ENCODE measurements at regions of chr10 and their contacts with region 1.

Region 1: DNA sequence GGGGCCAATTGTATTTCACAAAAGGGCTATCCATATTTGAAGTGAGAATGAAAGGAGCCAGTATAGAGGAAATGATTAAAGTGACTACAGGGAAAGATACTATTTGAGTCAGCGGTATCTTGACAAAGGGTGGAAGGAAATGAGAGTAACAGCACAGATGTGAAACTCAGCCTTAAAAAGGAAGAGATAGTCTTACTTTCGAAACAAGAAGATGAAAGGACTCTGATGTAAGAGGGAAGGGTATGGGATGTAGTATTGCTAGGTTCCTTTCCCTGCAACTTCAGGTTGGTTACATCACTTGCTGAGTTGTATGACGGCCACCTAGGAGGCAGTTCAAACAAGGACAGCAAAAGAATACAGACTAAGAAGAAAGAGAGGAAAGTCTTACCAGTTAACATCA is 13.7 kb downstream of the CISD1 start:
- DNase-seq: peak; percentile 68
- H3K4me3 Mint-ChIP-seq: peak overlapping the region; percentile 57
- H3K27ac Mint-ChIP-seq: peak overlapping the region; percentile 91
- H3K4me1 Mint-ChIP-seq: peaks cover 41% of the 10 kb centered on the region
- H3K27me3 Mint-ChIP-seq: no peaks in the 10 kb centered on the region

Region 2: DNA sequence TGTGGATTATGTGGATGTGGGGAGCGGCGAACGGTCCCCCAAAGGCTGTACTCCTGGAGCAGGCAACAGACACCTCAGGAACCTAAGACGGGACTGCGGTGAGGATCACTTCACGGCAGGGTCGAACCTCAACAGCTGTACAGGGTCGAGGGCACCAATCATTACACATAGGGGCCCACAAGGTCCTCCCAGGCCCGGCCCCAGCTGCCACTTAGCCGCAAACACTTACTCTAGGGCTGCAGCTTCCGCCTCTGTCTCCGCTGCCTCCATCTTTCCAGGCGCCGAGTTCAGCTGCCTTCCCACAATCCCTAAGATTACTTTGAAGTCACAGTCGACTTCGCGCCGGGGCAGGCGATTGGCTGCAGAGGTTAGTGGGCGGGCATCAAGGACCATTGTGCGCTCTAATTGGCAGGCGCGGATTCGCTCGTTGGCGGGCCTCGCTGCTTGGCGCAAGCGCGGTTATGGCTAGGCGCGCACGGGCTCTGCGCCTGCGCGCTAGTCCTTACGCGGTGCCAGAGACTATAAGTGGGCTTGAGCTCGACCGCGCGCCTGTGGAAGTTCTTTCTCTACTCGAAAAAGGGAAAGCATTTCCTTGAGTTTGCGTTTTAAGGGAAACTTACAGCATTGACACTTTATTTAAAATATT is 1921.5 kb before region 1 on chr10 and contains the start of gene ZWINT:
- CTCF ChIA-PET with region 1: no interaction called
- intact Hi-C with region 1: loop called (anchors 5 kb)
- DNase-seq: peak; percentile 95
- H3K4me3 Mint-ChIP-seq: peak within 1 kb of the TSS; percentile 96
- H3K27ac Mint-ChIP-seq: peak within 1 kb of the TSS; percentile 91
- H3K4me1 Mint-ChIP-seq: peaks cover 30% of the 10 kb centered on the region
- H3K27me3 Mint-ChIP-seq: no peaks in the 10 kb centered on the region
- total RNA-seq, gene ZWINT: 80.8 to 85.4 TPM

Region 3: DNA sequence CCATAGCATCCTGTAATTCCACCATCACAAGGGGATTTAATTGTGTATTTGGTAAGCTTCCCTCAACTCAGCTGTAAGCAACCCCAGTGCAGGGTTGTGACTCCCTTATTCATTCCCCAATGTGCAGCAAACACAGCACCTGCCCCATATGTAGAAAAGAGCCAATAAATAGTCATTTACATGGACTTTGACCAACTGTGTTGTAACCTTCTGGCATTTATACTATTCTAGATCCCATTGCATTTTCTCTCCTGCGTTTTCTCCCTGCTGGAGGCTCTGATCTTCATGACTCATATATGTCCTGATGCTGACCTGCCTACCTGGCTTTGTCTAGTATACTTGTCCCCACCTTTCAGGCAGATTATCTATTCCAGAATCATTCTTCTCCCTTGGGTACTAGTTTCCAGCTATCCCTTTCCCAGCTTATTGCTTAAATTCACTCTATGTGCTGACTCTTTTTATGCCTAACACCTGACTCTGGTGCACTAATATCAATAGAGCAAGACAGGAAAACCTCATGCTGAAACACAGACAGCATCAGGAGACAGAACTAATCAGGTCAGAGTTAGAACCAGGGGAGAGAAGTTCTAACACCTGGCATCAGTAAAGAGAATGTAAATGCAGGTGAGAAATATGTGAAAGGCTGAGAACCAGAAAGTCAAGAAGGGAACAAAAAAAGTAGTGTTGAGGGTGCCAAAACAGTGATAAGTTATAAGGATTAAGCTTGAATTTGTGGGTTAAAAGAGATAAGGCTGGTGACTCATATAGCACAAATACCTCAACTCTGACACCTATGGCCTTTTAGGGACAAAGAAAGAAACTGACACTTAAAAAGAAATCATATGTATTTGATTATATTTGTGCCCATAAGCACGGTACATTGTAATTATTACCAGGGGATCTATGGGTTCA is 417.6 kb before region 1 on chr10:
- CTCF ChIA-PET with region 1: no interaction called
- intact Hi-C with region 1: no loop called
- DNase-seq: no peak
- H3K4me3 Mint-ChIP-seq: no peak overlapping the region
- H3K27ac Mint-ChIP-seq: no peak overlapping the region
- H3K4me1 Mint-ChIP-seq: no peaks in the 10 kb centered on the region
- H3K27me3 Mint-ChIP-seq: no peaks in the 10 kb centered on the region

Region 4: GRCh38 chr10:58212622-58213021 is 70.0 kb before region 1 on chr10:
- CTCF ChIA-PET with region 1: no interaction called
- intact Hi-C with region 1: loop called (anchors 2 kb)
- DNase-seq: peak; percentile 13
- H3K4me3 Mint-ChIP-seq: no peak overlapping the region
- H3K27ac Mint-ChIP-seq: peak overlapping the region; percentile 34
- H3K4me1 Mint-ChIP-seq: peaks cover 19% of the 10 kb centered on the region
- H3K27me3 Mint-ChIP-seq: no peaks in the 10 kb centered on the region

Region 5: DNA sequence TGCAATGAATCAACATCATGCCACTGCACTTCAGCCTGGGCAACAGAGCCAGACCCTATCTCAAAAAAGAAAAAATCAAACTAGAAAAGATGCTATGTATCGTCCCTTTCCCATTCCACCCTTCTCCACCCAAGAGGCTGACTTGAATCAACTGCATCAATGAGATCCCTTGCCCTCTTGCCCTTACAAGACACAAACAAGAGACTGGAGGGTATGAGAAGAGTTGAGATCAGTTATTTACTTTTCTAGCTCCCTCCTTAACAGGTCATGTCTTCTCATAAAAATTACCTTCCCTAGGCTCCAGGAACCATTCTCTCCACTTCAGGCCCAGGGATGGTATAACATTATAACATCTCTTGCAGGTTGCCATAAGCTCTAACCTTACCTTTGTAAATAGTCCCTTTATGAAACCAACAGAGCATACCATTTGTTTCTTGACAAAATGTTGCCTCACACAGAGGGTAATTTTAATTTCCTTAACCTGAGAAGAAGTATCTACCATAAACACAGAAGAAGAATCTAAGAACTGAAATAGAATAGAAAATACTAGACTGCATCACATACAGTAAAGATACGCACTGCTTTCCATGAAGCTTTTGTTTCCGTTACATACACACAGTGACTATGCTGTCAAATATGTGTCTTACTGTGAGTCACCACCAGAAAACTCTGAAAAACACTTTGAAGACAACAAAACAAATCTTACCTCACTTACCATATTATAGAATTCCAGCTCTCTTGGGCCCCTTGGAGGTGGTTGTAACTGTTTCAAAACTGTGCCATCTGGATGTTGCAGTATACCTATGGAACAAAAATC is 45.4 kb before region 1 on chr10:
- CTCF ChIA-PET with region 1: no interaction called
- intact Hi-C with region 1: loop called (anchors 1 kb)
- DNase-seq: peak; percentile 23
- H3K4me3 Mint-ChIP-seq: no peak overlapping the region
- H3K27ac Mint-ChIP-seq: peak overlapping the region; percentile 89
- H3K4me1 Mint-ChIP-seq: peaks cover 47% of the 10 kb centered on the region
- H3K27me3 Mint-ChIP-seq: no peaks in the 10 kb centered on the region

Region 6: GRCh38 chr10:58384999-58385783 is 102.6 kb after region 1 on chr10 and contains the start of gene TFAM:
- CTCF ChIA-PET with region 1: no interaction called
- intact Hi-C with region 1: loop called (anchors 1 kb)
- DNase-seq: peak; percentile 98
- H3K4me3 Mint-ChIP-seq: peak within 1 kb of the TSS; percentile 100
- H3K27ac Mint-ChIP-seq: peak within 1 kb of the TSS; percentile 97
- H3K4me1 Mint-ChIP-seq: peaks cover 36% of the 10 kb centered on the region
- H3K27me3 Mint-ChIP-seq: no peaks in the 10 kb centered on the region
- total RNA-seq, gene TFAM: 87.7 to 91.8 TPM

Measured in activated naive CD4-positive, alpha-beta T cell treated with anti-CD3 and anti-CD28 coated beads for 36 hours (primary cell).